Heart right ventricle (tissue), 16 donors: ENCODE measurements at regions of chr21 and their contacts with region 1.

Region 1: GRCh38 chr21:38805328-38806152 is at the start of gene ETS2:
- DNase-seq: peak; percentile 91 to 94
- ATAC-seq: peak; percentile 88 to 94 (median 92)
- H3K4me3 ChIP-seq: peak within 1 kb of the TSS; percentile 68 to 100 (median 92)
- H3K27ac ChIP-seq: peak within 1 kb of the TSS; percentile 91 to 99 (median 98)
- H3K4me1 ChIP-seq: peaks cover 0 to 39% (median 16%) of the 10 kb centered on the region in 9 donors
- H3K27me3 ChIP-seq: no peaks in the 10 kb centered on the region
- CTCF ChIP-seq: peak in 2 of 9 donors; percentile 6 to 31
- total RNA-seq, gene ETS2: 27.5 to 81.5 (median 46.5) TPM

Region 2: DNA sequence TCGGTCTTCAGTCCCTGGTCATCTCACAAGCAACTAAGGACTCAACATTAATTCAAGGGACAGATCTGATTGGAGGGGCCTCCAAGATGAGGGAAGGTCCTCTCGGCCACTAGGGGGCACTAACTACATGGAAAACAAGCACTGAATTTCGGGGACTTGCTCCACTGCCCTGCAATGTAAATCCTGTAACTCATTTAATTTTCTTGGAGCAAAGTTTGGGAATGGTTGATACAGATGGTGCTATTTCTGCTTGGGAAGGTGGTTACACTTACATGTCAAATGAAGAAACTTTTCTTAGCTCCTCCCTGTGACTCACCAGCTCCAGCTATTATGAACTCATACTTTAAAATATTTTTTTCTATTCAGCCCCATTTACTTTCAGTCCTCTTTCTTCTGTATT is 646.2 kb before region 1 on chr21:
- intact Hi-C with region 1: no loop called
- DNase-seq: peak; percentile 11 to 62
- ATAC-seq: peak in 4 of 8 donors; percentile 33 to 74 (median 48)
- H3K4me3 ChIP-seq: no peak overlapping the region
- H3K27ac ChIP-seq: no peak overlapping the region
- H3K4me1 ChIP-seq: peaks cover 0 to 5% (median 0%) of the 10 kb centered on the region in 9 donors
- H3K27me3 ChIP-seq: peaks cover 0 to 33% (median 15%) of the 10 kb centered on the region in 7 donors
- CTCF ChIP-seq: peak; percentile 68 to 86 (median 81)

Region 3: DNA sequence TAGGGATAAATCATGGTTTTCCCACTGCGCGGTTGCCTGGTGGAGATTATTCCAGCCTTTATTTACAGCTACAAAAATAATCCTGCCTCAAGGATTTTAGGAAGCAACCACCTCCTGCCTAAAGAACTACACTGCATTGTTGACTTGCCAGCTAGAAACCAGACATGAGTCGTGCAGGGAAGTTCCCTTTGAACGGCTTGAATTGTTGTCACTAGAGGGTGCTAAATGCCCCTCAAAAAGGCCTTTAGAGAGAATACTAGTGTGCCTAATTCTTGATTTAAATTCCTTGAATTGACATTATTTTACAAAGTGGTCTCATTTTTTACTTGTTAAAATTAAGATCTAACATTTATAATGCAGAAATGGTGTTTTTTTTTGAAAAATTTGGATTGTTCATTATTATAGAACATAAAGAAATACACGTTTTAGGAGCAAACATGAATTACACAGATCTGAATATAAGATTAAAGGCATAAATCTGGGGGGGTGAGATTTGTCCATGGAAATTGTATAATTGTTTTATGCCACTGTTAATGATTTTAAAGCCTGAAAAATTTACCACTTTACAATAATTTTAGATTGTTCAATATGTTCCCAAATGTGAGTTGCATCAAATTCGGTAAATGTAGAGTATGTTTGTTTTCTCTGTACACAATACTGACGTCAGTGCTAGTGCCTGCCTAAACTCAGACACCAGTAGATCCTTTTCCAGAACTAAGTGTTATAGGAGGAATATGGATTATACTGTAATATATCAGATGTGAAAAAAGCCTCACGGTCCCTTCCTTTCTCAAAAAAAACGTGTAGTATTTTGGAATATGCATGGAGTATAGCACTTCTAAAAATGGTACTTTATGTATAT is 299.7 kb before region 1 on chr21:
- intact Hi-C with region 1: loop called in 2 of 10 experiments (anchors 5 to 10 kb)
- DNase-seq: peak in 1 of 2 donors; percentile 64
- ATAC-seq: peak; percentile 77 to 94 (median 88)
- H3K4me3 ChIP-seq: peak overlapping the region in 2 of 10 donors; percentile 14 to 26
- H3K27ac ChIP-seq: peak overlapping the region in 3 of 10 donors; percentile 3 to 13 (median 13)
- H3K4me1 ChIP-seq: peaks cover 0 to 49% (median 13%) of the 10 kb centered on the region in 9 donors
- H3K27me3 ChIP-seq: no peaks in the 10 kb centered on the region
- CTCF ChIP-seq: peak; percentile 50 to 90 (median 74)

Region 4: GRCh38 chr21:38766987-38767722 is 38.4 kb before region 1 on chr21:
- intact Hi-C with region 1: loop called in 1 of 10 experiments (anchors 5 kb)
- DNase-seq: no peak
- ATAC-seq: peak in 6 of 8 donors; percentile 28 to 76 (median 47)
- H3K4me3 ChIP-seq: peak overlapping the region in 8 of 10 donors; percentile 4 to 40 (median 35)
- H3K27ac ChIP-seq: peak overlapping the region in 3 of 10 donors; percentile 32 to 77 (median 62)
- H3K4me1 ChIP-seq: peaks cover 0 to 19% (median 0%) of the 10 kb centered on the region in 9 donors
- H3K27me3 ChIP-seq: no peaks in the 10 kb centered on the region
- CTCF ChIP-seq: no peak

Region 5: DNA sequence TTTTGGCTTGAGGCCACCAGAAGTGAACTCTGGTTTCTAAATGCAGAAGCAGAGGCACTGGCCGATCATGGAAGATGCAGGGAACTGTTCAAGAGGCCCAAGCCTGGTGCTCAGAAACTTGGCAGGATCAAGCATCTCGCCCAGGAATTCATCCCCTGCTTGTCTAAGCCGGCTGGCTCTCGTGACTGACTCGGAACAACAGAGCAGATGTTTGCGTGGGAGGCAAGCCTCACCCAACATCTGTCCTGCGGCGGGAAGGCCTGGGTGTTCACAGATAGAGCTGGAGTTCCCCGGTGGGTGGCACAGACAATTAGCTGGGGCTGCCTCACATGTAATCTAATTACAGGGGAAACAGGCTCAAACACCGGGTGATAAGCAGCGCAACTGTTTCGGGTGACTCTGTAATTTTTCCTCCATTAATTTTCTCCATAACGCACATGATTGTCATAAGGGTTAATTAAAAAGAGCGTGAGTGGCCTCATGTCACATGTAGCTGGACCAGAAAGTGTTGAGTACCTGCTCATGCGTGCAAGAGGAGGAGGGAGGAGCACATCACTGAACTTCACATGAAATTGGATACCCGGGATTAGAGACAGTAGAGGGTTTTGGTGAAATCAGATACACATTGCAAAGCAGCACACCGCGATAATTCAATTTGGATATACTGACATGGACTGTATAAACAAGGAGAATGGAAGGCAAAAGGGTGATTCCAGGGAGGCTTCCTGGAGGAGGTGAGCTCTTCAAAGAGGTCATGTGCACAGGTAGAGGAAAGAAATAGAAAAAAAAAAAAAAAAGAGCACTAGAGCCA is 180.2 kb after region 1 on chr21:
- intact Hi-C with region 1: loop called in 3 of 10 experiments (anchors 5 kb)
- DNase-seq: peak; percentile 65 to 75
- ATAC-seq: peak; percentile 40 to 78 (median 66)
- H3K4me3 ChIP-seq: no peak overlapping the region
- H3K27ac ChIP-seq: peak overlapping the region; percentile 9 to 82 (median 62)
- H3K4me1 ChIP-seq: peaks cover 21 to 66% (median 64%) of the 10 kb centered on the region in 9 donors
- H3K27me3 ChIP-seq: peaks cover 0 to 5% (median 0%) of the 10 kb centered on the region in 7 donors
- CTCF ChIP-seq: no peak

Region 6: GRCh38 chr21:39004634-39005501 is 199.3 kb after region 1 on chr21:
- intact Hi-C with region 1: loop called in 4 of 10 experiments (anchors 5 to 10 kb)
- DNase-seq: peak; percentile 65 to 78
- ATAC-seq: peak; percentile 38 to 74 (median 65)
- H3K4me3 ChIP-seq: no peak overlapping the region
- H3K27ac ChIP-seq: peak overlapping the region; percentile 74 to 92 (median 84)
- H3K4me1 ChIP-seq: peaks cover 13 to 91% (median 76%) of the 10 kb centered on the region in 9 donors
- H3K27me3 ChIP-seq: no peaks in the 10 kb centered on the region
- CTCF ChIP-seq: no peak

Region 7: DNA sequence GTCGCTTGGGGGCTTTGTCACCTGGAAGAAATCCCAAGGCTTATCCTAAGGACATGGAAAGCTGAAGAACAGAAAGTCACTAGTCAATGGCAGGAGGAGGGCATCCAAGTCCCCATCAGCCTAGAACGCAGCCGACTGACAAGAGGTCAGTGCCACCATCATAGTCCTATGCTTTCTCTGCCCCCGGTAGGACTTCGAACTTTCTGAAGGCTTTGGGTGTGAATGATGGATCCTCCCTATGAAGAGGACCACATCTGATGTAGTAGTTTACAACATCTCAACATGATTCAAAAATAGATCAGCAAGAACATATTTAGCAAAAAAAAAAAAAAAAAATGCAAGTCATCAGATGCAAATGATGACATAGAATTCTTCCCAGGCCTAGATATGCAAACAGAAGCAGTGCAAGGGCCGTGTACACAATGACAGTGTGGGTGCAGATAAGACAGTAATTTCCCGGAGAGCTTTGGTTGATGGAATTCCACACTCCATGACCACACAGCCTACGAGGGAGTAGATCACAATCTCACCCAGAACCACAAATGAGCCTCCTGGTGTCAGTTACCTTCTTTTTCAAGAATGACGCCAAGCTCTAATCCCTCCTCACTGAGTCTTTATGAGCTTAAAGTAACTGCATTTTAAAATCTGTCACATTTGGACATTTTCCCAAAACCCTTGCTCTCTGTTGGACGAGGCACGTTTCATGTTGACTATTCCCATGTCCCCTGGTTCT is 289.5 kb after region 1 on chr21:
- intact Hi-C with region 1: loop called in 1 of 10 experiments (anchors 10 kb)
- DNase-seq: no peak
- ATAC-seq: peak in 6 of 8 donors; percentile 18 to 62 (median 38)
- H3K4me3 ChIP-seq: no peak overlapping the region
- H3K27ac ChIP-seq: peak overlapping the region in 9 of 10 donors; percentile 27 to 84 (median 64)
- H3K4me1 ChIP-seq: peaks cover 0 to 80% (median 27%) of the 10 kb centered on the region in 9 donors
- H3K27me3 ChIP-seq: no peaks in the 10 kb centered on the region
- CTCF ChIP-seq: no peak